ENCODE measurements at regions of chr10 and their contacts with region 1.

Region 1: GRCh38 chr10:100009793-100010676 is at the start of gene DNMBP:
- DNase-seq: peak; percentile 55 to 72
- ATAC-seq: peak; percentile 90 to 93
- H3K4me3 ChIP-seq: peak within 1 kb of the TSS; percentile 85 to 99 (median 89)
- H3K27ac ChIP-seq: peak within 1 kb of the TSS; percentile 82 to 87 (median 84)
- H3K4me1 ChIP-seq: peaks cover 38 to 40% of the 10 kb centered on the region in 2 donors
- H3K27me3 ChIP-seq: no peaks in the 10 kb centered on the region
- CTCF ChIP-seq: peak; percentile 41 to 88 (median 83)
- POLR2A ChIP-seq: peak; percentile 74
- total RNA-seq, gene DNMBP: 9.5 to 22.5 (median 15.0) TPM

Region 2: DNA sequence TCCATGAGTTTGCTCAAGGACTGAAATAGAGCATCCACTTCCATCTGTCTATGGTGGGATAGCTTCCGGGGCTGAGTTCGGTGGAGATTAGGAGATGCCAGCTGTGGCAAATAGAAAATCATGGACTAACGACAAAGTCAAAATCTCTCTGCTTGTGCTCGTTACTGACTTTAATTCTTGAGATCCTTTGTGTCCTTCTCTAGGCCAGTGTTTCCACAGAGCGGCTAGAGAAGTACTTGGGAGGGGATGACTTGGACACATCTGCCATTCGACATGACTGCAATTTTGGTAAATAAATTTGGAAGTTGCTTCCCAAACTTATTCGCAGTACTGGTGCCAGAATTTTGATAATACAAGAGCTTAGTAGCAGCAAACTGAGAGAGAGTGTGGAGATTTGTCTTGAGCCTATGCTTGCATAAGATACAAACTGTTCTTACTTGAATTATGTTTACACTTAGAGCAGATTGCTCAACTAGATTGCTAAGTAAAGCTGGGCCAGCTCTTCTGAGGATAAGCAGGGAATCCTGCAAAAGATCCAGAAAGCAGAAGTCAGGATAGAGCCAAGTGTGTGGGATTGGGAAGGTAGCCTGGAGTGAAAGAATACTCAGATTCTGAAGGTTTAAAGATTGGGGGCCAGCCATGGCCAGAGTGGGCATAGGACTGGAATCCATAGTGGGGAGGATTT is 200.0 kb before region 1 on chr10:
- in situ Hi-C with region 1: no loop called
- intact Hi-C with region 1: no loop called
- DNase-seq: peak; percentile 9 to 33
- ATAC-seq: peak; percentile 83 to 89
- H3K4me3 ChIP-seq: no peak overlapping the region
- H3K27ac ChIP-seq: peak overlapping the region; percentile 51 to 64 (median 55)
- H3K4me1 ChIP-seq: peaks cover 2 to 6% of the 10 kb centered on the region in 2 donors
- H3K27me3 ChIP-seq: no peaks in the 10 kb centered on the region
- CTCF ChIP-seq: no peak
- POLR2A ChIP-seq: peak in 1 of 2 donors; percentile 19

Region 3: GRCh38 chr10:99845837-99846382 is 164.1 kb before region 1 on chr10:
- in situ Hi-C with region 1: loop called in 1 of 4 experiments (anchors 10 kb)
- intact Hi-C with region 1: loop called (anchors 10 kb)
- DNase-seq: peak; percentile 52 to 75
- ATAC-seq: peak; percentile 97 to 99
- H3K4me3 ChIP-seq: peak overlapping the region; percentile 28 to 41 (median 32)
- H3K27ac ChIP-seq: peak overlapping the region in 1 of 4 donors; percentile 7
- H3K4me1 ChIP-seq: peaks cover 0 to 6% of the 10 kb centered on the region in 2 donors
- H3K27me3 ChIP-seq: no peaks in the 10 kb centered on the region
- CTCF ChIP-seq: peak; percentile 88 to 93 (median 91)
- POLR2A ChIP-seq: no peak

Region 4: GRCh38 chr10:99880080-99880835 is 129.8 kb before region 1 on chr10:
- in situ Hi-C with region 1: no loop called
- intact Hi-C with region 1: no loop called
- DNase-seq: no peak
- ATAC-seq: peak in 1 of 2 donors; percentile 30
- H3K4me3 ChIP-seq: no peak overlapping the region
- H3K27ac ChIP-seq: peak overlapping the region; percentile 24 to 54 (median 42)
- H3K4me1 ChIP-seq: no peaks in the 10 kb centered on the region
- H3K27me3 ChIP-seq: no peaks in the 10 kb centered on the region
- CTCF ChIP-seq: no peak
- POLR2A ChIP-seq: no peak

Region 5: GRCh38 chr10:99894613-99895012 is 115.4 kb before region 1 on chr10:
- in situ Hi-C with region 1: no loop called
- intact Hi-C with region 1: no loop called
- DNase-seq: no peak
- ATAC-seq: no peak
- H3K4me3 ChIP-seq: no peak overlapping the region
- H3K27ac ChIP-seq: no peak overlapping the region
- H3K4me1 ChIP-seq: no peaks in the 10 kb centered on the region
- H3K27me3 ChIP-seq: no peaks in the 10 kb centered on the region
- CTCF ChIP-seq: no peak
- POLR2A ChIP-seq: no peak

Region 6: GRCh38 chr10:99906470-99906869 is 103.6 kb before region 1 on chr10:
- in situ Hi-C with region 1: loop called in 1 of 4 experiments (anchors 25 kb)
- intact Hi-C with region 1: loop called (anchors 1 kb)
- DNase-seq: peak; percentile 80 to 93
- ATAC-seq: peak; percentile 98 to 100
- H3K4me3 ChIP-seq: no peak overlapping the region
- H3K27ac ChIP-seq: peak overlapping the region; percentile 47 to 69 (median 55)
- H3K4me1 ChIP-seq: peaks cover 4 to 5% of the 10 kb centered on the region in 2 donors
- H3K27me3 ChIP-seq: no peaks in the 10 kb centered on the region
- CTCF ChIP-seq: peak in 1 of 5 experiments; percentile 20
- POLR2A ChIP-seq: no peak

Region 7: DNA sequence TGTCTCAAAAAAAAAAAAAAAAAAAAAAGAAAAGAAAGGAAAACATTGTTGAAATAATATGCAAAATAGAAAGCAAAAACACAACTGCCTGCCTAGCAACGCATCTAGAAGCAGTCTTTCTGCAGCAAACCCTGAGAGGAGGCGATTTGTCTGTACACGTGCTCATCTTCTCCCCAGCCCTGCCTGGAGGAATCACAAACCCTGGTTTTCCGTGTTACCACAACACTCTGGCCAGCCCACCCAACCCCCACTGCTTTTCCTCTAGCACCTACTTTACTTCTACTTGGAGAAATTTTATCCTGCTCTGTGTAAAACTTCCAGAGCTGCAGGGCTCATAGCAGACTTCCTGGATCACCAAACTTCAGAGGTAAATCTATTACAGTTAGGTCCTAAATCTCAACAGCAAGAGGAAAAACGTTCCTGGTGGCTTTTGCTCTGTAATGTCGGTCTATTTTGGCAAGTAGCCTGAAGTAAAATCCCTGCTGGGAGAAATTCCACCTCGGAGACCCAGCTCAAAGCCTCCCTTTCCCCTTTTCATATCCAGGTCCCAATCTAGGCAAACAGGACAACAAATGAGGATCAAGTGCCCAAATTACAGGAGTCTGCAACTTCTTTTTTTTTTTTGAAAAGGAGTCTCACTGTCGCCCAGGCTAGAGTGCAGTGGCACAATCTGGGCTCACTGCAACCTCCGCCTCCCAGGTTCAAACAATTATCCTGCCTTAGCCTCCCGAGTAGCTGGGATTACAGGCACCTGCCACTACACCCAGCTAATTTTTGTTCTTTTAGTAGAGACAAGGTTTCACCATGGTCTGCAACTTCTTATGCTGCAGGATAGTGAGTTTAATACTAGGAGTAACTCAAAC is 91.8 kb before region 1 on chr10:
- in situ Hi-C with region 1: loop called in 1 of 4 experiments (anchors 25 kb)
- intact Hi-C with region 1: no loop called
- DNase-seq: no peak
- ATAC-seq: no peak
- H3K4me3 ChIP-seq: peak overlapping the region; percentile 2 to 43 (median 27)
- H3K27ac ChIP-seq: peak overlapping the region; percentile 8 to 52 (median 13)
- H3K4me1 ChIP-seq: peaks cover 14 to 15% of the 10 kb centered on the region in 2 donors
- H3K27me3 ChIP-seq: no peaks in the 10 kb centered on the region
- CTCF ChIP-seq: no peak
- POLR2A ChIP-seq: no peak

Region 8: DNA sequence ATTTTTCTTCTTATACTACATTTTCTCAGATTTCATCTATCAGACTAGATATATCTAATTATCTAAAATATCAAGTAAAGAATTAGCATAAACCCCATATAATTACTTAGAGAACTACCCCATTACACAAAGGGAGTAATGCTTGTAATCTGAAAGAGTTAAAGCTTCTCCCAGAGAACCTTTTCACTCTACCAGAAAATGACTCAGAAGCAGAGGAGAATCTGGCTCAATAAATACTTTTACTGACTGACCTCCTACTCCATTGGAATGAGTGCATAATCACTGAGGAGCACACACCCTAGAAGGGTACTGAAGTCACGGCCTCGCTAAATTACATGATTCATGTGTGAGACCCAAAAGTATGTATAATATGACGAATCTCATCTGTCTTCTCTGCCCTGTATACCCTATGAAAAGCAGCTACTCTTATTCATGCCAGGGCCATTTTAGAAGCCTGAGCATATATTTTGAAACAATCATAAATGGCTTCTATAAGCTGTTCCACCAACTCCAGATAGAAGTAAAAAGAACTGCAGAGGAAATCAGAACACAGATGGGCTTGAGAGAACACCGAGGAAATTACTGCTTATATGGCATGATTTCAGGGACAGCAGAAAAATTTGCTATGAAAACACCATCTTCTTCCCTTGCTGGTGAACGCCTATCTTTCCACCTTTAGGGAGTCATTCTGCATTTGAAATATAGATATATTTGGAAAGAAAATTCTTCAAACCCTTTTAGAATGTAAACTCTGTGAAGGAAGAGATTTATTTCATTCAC is 33.0 kb before region 1 on chr10:
- in situ Hi-C with region 1: no loop called
- intact Hi-C with region 1: loop called (anchors 5 kb)
- DNase-seq: no peak
- ATAC-seq: peak; percentile 56 to 73
- H3K4me3 ChIP-seq: peak overlapping the region in 1 of 4 donors; percentile 7
- H3K27ac ChIP-seq: peak overlapping the region; percentile 41 to 71 (median 60)
- H3K4me1 ChIP-seq: peaks cover 42 to 49% of the 10 kb centered on the region in 2 donors
- H3K27me3 ChIP-seq: no peaks in the 10 kb centered on the region
- CTCF ChIP-seq: no peak
- POLR2A ChIP-seq: no peak

Region 9: DNA sequence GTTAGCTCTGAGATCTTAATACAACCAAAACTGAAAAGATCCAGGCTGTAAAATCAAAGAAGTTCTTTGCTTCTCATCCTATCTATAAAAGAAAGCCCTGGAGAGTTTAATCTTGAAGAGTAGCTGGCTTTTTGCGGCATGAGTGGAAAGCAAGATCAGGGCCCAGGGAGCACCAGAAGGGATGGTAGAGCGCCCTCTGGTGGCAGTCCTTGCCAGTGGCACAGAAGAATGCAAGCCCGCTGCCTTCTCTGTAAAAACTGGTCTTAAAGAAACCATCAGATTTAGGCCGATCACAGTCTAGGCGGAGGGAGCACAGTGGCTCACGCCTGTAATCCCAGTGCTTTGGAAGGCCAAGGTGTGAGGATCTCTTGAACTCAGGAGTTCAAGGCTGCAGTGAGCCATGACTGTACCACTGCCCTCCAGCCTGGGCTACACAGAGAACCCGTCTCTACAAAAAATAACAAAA is 36.0 kb after region 1 on chr10:
- in situ Hi-C with region 1: no loop called
- intact Hi-C with region 1: loop called (anchors 2 kb)
- DNase-seq: peak; percentile 51 to 73
- ATAC-seq: peak; percentile 71 to 86
- H3K4me3 ChIP-seq: no peak overlapping the region
- H3K27ac ChIP-seq: peak overlapping the region in 2 of 4 donors; percentile 21 to 68
- H3K4me1 ChIP-seq: peaks cover 4 to 12% of the 10 kb centered on the region in 2 donors
- H3K27me3 ChIP-seq: no peaks in the 10 kb centered on the region
- CTCF ChIP-seq: peak; percentile 88 to 96 (median 92)
- POLR2A ChIP-seq: no peak

Region 10: DNA sequence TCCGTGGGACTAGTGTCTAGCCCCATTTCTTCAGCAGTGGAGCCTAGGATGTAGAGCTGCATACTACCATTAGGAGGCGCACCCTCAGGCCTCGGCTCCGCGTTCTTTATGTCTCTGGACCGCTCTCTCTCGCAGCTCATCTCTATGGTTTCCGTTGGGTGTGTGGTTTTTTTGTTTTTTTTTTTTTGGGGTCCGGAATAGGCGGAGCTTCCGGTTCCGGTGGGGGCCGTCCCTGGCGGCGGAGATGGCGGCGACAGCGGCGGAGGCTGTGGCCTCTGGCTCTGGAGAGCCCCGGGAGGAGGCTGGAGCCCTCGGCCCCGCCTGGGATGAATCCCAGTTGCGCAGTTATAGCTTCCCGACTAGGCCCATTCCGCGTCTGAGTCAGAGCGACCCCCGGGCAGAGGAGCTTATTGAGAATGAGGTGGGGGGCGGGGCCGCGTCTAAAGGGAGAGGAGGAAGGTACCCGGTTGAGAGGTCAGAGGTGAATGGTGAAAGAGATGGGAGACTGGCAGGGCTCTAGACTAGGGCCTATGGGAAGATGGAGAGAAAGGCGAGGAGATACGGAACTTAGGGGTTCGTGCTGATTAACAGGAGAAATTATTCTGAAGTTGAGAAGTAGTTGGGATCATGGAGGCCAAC is 525.8 kb after region 1 on chr10 and contains the start of gene HIF1AN:
- in situ Hi-C with region 1: no loop called
- intact Hi-C with region 1: loop called (anchors 5 kb)
- DNase-seq: peak; percentile 81 to 91
- ATAC-seq: peak; percentile 97 to 98
- H3K4me3 ChIP-seq: peak within 1 kb of the TSS; percentile 71 to 99 (median 88)
- H3K27ac ChIP-seq: peak within 1 kb of the TSS; percentile 76 to 86 (median 82)
- H3K4me1 ChIP-seq: peaks cover 20 to 31% of the 10 kb centered on the region in 2 donors
- H3K27me3 ChIP-seq: no peaks in the 10 kb centered on the region
- CTCF ChIP-seq: peak; percentile 71 to 96 (median 83)
- POLR2A ChIP-seq: peak; percentile 67 to 81
- total RNA-seq, gene HIF1AN: 21.6 to 25.7 (median 24.0) TPM

Measured in gastrocnemius medialis (tissue), 4 donors.